PC-3 (cell line): ENCODE measurements at regions of chr15 and their contacts with region 1.

Region 1: GRCh38 chr15:22866079-22866478 is 27.6 kb downstream of the NIPA2 start:
- DNase-seq: peak; percentile 16
- ATAC-seq: no peak
- H3K4me3 ChIP-seq: no peak overlapping the region
- H3K27ac ChIP-seq: no peak overlapping the region
- H3K4me1 ChIP-seq: no peaks in the 10 kb centered on the region
- H3K27me3 ChIP-seq: no peaks in the 10 kb centered on the region
- CTCF ChIP-seq: no peak

Region 2: DNA sequence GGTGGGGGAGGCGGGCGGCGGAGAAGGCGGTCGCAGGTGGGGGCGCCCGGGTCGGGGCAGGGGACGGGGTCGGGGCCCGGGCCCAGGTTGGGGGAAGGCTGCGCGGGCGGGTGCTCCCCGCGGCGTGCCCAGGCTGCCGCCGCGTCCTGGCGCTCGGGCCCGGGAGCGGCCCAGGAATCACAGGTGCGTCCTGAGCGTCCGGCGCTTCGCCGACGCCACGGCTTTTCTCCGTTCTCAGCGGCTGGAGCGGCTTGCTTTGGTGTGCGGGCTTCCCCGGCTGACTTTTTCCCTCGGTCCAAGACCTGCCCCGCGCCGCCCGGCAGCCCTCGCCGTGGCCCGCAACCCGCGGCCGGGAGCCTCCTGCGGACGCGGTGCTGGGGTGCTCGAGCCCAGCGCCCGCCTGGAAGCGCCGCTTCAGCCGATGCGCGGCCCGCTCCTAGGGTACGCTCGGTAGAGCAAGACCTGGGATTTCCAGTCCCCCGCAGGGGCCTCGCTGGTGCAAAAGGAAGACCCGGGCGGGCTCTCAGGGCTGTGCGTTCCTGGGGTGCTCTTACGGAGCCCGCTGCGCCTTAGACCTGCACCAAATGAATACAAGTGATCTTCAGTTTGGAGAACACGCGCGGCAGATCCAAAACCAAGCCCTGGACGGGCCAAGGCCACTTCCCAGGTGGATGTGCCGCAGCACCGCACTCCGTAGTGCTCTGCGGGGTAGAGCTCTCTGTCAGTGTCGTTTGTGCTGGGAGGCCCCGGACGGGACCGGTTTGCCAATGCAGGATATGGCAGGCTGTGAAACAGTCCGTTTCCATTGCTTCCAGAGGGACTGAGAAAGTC is 79.0 kb before region 1 on chr15:
- CTCF ChIA-PET with region 1: no interaction called
- POLR2A ChIA-PET with region 1: no interaction called
- intact Hi-C with region 1: no loop called
- DNase-seq: peak; percentile 40
- ATAC-seq: peak; percentile 42
- H3K4me3 ChIP-seq: peak overlapping the region; percentile 81
- H3K27ac ChIP-seq: peak overlapping the region; percentile 30; the same call in 1 of the 2 replicates
- H3K4me1 ChIP-seq: no peaks in the 10 kb centered on the region
- H3K27me3 ChIP-seq: no peaks in the 10 kb centered on the region
- CTCF ChIP-seq: no peak

Region 3: GRCh38 chr15:22838292-22839042 is 27.6 kb before region 1 on chr15 and contains the start of gene NIPA2:
- CTCF ChIA-PET with region 1: no interaction called
- POLR2A ChIA-PET with region 1: interaction called, 14 read pairs
- intact Hi-C with region 1: no loop called
- DNase-seq: peak; percentile 99
- ATAC-seq: peak; percentile 94
- H3K4me3 ChIP-seq: peak within 1 kb of the TSS; percentile 91
- H3K27ac ChIP-seq: peak within 1 kb of the TSS; percentile 85
- H3K4me1 ChIP-seq: peaks cover 9% of the 10 kb centered on the region
- H3K27me3 ChIP-seq: no peaks in the 10 kb centered on the region
- CTCF ChIP-seq: no peak
- total RNA-seq, gene NIPA2: 108 and 115 TPM in 2 replicates

Region 4: GRCh38 chr15:23003736-23004135 is 137.7 kb after region 1 on chr15:
- CTCF ChIA-PET with region 1: no interaction called
- POLR2A ChIA-PET with region 1: no interaction called
- intact Hi-C with region 1: no loop called
- DNase-seq: no peak
- ATAC-seq: no peak
- H3K4me3 ChIP-seq: no peak overlapping the region
- H3K27ac ChIP-seq: no peak overlapping the region
- H3K4me1 ChIP-seq: no peaks in the 10 kb centered on the region
- H3K27me3 ChIP-seq: no peaks in the 10 kb centered on the region
- CTCF ChIP-seq: 0 out of 2 replicates have a peak, but pooled peaks have one; percentile 18